Activated naive CD4-positive, alpha-beta T cell treated with anti-CD3 and anti-CD28 coated beads for 36 hours (primary cell): ENCODE measurements at regions of chr3 and their contacts with region 1.

Region 1: DNA sequence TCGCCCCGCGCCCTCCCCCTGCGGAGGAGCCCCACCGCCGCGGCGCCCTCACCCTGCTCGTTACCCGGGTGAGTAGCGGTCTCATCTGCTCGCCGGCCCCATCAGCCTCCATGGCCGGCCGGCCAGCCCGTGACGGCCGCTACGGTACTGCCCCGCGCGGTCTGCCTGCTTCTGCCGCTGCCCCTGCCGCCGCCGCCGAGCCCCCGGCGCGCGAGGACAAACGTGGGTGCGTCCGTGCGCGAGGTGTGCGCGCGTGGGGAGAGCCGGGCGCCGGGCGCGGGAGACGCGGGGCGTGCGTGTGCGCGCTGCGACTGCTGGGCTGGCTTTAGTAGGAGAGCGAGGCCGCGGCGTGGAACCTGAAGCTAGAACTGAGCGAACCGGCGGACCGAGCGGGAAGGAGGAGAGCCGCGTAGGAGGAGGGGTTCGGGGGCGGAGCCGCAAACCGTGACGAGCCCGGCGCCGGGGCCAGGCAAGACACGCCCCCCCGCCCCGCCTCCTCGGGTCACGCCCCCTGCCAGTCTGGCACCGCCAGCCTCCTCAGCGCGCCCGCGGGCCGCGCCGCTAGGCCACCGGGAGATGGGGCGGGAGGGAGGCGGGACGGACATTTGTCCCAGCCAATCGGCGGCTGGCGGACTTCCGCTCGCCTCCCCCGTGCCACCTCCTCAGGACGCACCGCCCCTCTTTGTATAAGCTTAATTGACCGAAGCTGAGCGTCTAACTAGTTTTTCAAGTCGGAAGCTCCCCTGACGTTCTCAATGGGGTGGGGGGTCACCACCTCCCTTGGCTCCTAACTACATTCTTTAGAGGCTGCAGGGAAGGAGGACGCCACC is at the start of gene SLC4A7:
- DNase-seq: peak; percentile 98
- H3K4me3 Mint-ChIP-seq: peak within 1 kb of the TSS; percentile 98
- H3K27ac Mint-ChIP-seq: peak within 1 kb of the TSS; percentile 91
- H3K4me1 Mint-ChIP-seq: peaks cover 31% of the 10 kb centered on the region
- H3K27me3 Mint-ChIP-seq: no peaks in the 10 kb centered on the region
- total RNA-seq, gene SLC4A7: 37.0 to 39.0 TPM

Region 2: GRCh38 chr3:25664810-25665314 is 1819.4 kb before region 1 on chr3 and contains the start of gene TOP2B:
- CTCF ChIA-PET with region 1: no interaction called
- intact Hi-C with region 1: loop called (anchors 2 kb)
- DNase-seq: peak; percentile 97
- H3K4me3 Mint-ChIP-seq: peak within 1 kb of the TSS; percentile 92
- H3K27ac Mint-ChIP-seq: peak within 1 kb of the TSS; percentile 100
- H3K4me1 Mint-ChIP-seq: peaks cover 42% of the 10 kb centered on the region
- H3K27me3 Mint-ChIP-seq: no peaks in the 10 kb centered on the region
- total RNA-seq, gene TOP2B: 113 to 114 TPM

Region 3: DNA sequence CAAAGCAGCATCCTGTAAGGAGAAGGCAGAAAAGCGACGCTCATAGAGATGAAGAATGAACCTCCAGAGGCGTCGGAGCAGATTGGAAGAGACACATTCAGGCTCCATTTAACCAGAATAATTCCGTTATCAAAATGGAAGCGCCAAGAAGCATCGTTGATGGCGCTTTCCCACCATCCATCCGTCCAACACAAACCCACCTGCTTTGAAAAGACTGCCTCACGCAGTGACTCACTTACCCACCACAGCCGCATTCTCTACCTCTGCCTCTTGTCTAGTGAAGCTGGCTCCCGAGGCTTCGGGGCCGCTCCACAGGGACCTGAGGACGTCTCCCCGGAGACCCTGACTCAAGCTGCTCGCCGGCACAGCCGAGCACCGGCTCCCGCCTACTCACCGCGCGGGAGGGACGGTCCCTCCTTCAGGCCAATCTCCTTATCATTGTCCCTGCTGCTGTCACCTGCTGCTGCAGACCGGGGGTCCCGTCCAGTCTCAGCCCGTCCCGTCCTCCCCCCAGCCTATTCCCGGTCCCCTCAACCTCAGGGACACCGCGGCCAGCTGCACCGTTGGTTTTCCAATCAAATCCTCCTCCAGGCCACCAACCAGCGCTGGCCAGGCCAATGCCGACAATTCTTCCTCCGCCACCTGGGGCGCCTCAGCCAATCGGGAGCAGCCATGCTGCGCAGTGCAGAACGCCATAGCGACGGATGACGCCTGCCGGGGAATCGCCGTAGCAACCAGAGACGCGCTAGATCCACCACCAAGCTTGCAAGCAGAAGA is 115.2 kb before region 1 on chr3 and contains the start of gene NEK10:
- CTCF ChIA-PET with region 1: no interaction called
- intact Hi-C with region 1: loop called (anchors 1 kb)
- DNase-seq: peak; percentile 91
- H3K4me3 Mint-ChIP-seq: peak within 1 kb of the TSS; percentile 94
- H3K27ac Mint-ChIP-seq: peak within 1 kb of the TSS; percentile 63
- H3K4me1 Mint-ChIP-seq: peaks cover 13% of the 10 kb centered on the region
- H3K27me3 Mint-ChIP-seq: no peaks in the 10 kb centered on the region
- total RNA-seq, gene NEK10: 0.07 to 0.26 TPM

Region 4: GRCh38 chr3:27596334-27596841 is 112.2 kb after region 1 on chr3:
- CTCF ChIA-PET with region 1: no interaction called
- intact Hi-C with region 1: loop called (anchors 10 kb)
- DNase-seq: no peak
- H3K4me3 Mint-ChIP-seq: no peak overlapping the region
- H3K27ac Mint-ChIP-seq: no peak overlapping the region
- H3K4me1 Mint-ChIP-seq: peaks cover 14% of the 10 kb centered on the region
- H3K27me3 Mint-ChIP-seq: no peaks in the 10 kb centered on the region

Region 5: GRCh38 chr3:27712136-27713077 is 228.2 kb after region 1 on chr3:
- CTCF ChIA-PET with region 1: interaction called, 4 read pairs
- intact Hi-C with region 1: loop called (anchors 2 kb)
- DNase-seq: peak; percentile 81
- H3K4me3 Mint-ChIP-seq: peak overlapping the region; percentile 93
- H3K27ac Mint-ChIP-seq: no peak overlapping the region
- H3K4me1 Mint-ChIP-seq: peaks cover 19% of the 10 kb centered on the region
- H3K27me3 Mint-ChIP-seq: peaks cover 49% of the 10 kb centered on the region

Region 6: DNA sequence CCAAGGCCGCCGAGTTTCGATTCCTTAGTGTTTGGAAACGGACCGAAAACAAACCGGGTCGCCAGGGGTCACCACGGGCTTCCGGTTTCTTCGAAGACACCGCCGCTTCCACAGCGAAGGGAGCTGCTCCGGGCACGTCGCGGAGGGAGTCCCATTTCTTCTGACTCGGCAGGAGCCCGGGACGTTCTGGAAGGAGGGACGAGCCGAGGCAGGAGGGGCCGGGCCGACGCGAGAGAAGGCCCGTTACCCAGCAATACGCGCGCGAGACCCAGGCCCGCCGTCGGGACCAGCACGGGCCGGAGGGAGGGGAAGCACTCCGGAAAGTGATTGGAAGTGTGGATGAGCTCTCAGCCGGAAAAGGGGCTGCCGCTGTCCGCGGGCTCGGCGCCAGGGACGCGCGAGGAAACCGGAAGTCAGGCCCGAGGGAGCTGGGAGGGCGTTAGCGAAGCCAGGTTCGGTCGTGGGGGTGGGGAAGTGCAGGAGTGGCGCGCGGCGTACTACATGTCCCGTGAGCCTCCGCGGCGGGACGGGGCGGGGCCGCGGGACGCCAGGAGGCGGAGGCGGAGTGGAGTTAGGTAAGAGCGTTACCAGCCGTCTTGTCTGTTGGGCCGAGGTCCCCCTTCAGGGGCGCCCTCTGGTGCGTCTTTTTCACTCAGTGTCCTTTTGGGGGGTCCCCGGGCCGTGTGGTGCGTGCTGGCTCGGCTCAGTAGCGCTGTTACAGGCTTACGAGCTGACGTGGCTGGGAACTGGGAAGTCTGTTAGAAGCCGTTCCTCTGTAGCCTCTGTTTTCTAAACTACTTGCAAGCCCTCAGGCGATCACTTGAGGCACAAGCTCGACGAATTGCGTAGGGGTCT is 864.6 kb after region 1 on chr3 and contains the starts of genes AZI2 and ZCWPW2:
- CTCF ChIA-PET with region 1: no interaction called
- intact Hi-C with region 1: loop called (anchors 1 kb)
- DNase-seq: peak; percentile 93
- H3K4me3 Mint-ChIP-seq: peak within 1 kb of the TSS; percentile 88
- H3K27ac Mint-ChIP-seq: peak within 1 kb of the TSS; percentile 92
- H3K4me1 Mint-ChIP-seq: peaks cover 36% of the 10 kb centered on the region
- H3K27me3 Mint-ChIP-seq: no peaks in the 10 kb centered on the region
- total RNA-seq, gene AZI2: 31.5 to 39.4 TPM
- total RNA-seq, gene ZCWPW2: 0.17 TPM in 1 of 2 experiments, not detected in the other